CD4-positive, alpha-beta T cell (primary cell): ENCODE measurements at regions of chr12 and their contacts with region 1.

Region 1: GRCh38 chr12:10562306-10562933 is 51.0 kb downstream of the MAGOHB start:
- DNase-seq: peak in 4 of 14 experiments; percentile 33 to 69 (median 64)
- ATAC-seq: no peak
- H3K4me3 ChIP-seq: no peak overlapping the region
- H3K4me3 Mint-ChIP-seq: no peak overlapping the region
- H3K27ac ChIP-seq: no peak overlapping the region
- H3K27ac Mint-ChIP-seq: no peak overlapping the region
- H3K4me1 ChIP-seq: no peaks in the 10 kb centered on the region
- H3K4me1 Mint-ChIP-seq: peaks cover 6% of the 10 kb centered on the region
- H3K27me3 ChIP-seq: no peaks in the 10 kb centered on the region
- H3K27me3 Mint-ChIP-seq: peaks cover 27% of the 10 kb centered on the region
- CTCF ChIP-seq: peak; percentile 85

Region 2: GRCh38 chr12:9808504-9808903 is 753.9 kb before region 1 on chr12:
- CTCF ChIA-PET with region 1: no interaction called
- POLR2A ChIA-PET with region 1: no interaction called
- intact Hi-C with region 1: loop called in 1 of 2 experiments (anchors 10 kb)
- DNase-seq: no peak
- ATAC-seq: no peak
- H3K4me3 ChIP-seq: no peak overlapping the region
- H3K4me3 Mint-ChIP-seq: no peak overlapping the region
- H3K27ac ChIP-seq: no peak overlapping the region
- H3K27ac Mint-ChIP-seq: no peak overlapping the region
- H3K4me1 ChIP-seq: peaks cover 2% of the 10 kb centered on the region
- H3K4me1 Mint-ChIP-seq: peaks cover 2% of the 10 kb centered on the region
- H3K27me3 ChIP-seq: peaks cover 2 to 5% of the 10 kb centered on the region in 2 experiments
- H3K27me3 Mint-ChIP-seq: no peaks in the 10 kb centered on the region
- CTCF ChIP-seq: no peak

Region 3: DNA sequence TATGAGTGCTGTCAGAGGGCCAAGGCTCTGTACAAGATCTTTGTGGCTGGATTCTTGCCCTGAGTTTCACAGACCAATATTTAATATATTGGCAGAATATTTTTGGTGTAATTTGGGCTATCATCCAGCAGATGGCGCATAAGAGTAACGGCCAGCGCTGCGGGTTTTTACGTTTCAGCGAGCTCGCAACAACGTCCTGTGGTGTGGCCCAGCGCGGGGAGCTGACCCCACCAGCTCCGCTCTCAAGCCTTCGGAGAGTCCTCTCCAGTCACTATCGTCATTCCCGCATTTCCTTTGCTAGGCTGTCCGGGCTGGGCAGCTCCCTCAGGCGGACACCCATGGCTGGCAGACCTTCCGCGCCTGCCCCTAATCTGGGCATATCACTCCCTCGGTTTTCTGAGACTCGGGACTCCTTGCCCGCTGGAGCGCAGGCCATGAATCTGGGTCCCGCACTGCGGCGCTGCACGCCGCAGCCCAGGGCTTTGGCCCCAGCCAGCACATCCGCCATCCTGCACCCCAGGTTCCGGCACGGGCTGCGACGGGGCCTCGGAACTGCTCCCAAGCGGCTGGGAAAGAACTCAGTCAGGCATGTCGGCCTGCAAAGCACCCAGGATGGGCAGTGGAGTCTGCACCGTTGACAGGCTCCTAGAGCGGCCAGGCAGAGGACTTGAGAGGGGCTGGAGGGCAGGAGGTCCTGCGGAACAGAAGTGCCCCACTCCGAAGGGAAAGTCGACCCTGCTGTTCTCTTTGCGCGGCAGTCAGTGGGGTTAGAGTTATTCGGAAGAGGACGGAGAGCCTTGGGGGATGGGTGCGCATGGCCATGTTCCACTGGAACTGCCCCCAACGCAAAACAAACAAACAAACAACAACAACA is 408.9 kb before region 1 on chr12:
- CTCF ChIA-PET with region 1: interaction called, 4 read pairs
- POLR2A ChIA-PET with region 1: no interaction called
- intact Hi-C with region 1: loop called in 1 of 2 experiments (anchors 2 kb)
- DNase-seq: peak; percentile 22 to 79 (median 41)
- ATAC-seq: peak; percentile 78
- H3K4me3 ChIP-seq: peak overlapping the region; percentile 63
- H3K4me3 Mint-ChIP-seq: peak overlapping the region; percentile 95
- H3K27ac ChIP-seq: no peak overlapping the region
- H3K27ac Mint-ChIP-seq: peak overlapping the region; percentile 54
- H3K4me1 ChIP-seq: peaks cover 13% of the 10 kb centered on the region
- H3K4me1 Mint-ChIP-seq: peaks cover 9% of the 10 kb centered on the region
- H3K27me3 ChIP-seq: peaks cover 0 to 2% of the 10 kb centered on the region in 2 experiments
- H3K27me3 Mint-ChIP-seq: peaks cover 19% of the 10 kb centered on the region
- CTCF ChIP-seq: peak; percentile 93

Region 4: DNA sequence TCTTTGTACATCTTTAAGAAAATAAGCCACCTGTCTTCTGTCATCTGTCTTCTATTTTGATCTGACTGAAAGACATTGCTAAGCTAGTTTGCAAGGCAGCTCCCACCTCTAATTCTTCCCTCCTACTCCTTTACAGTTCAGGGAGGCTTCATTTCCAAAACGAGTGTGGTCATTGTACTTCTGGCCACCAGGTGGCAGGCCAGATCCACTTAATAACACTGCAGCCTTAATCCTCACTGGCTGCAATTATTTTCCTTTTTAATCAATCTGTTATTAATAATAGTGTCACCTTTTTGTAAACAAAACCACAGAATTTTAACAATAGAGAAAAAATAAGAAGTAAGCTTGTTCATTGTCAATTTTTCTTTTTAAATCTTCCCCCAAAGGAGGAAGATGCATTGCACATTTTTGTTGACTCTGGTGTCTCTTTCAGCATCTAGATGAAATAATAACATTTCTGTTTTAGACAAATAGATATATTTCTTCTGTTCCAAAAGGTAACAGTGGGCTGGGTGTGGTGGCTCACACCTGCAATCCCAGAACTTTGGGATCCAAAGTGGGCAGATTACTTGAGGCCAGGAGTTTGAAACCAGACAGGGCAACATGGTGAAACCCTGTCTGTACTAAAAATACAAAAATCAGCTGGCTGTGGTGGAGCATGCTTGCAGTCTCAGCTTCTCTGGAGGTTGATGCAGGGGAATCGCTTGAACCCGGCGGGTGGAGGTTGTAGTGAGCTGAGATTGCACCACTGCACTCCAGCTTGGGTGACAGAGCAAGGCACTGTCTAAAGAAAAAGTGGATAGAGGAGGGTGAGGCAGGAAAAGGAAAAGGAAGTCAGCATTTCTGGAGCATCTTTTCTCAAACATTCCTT is 326.4 kb before region 1 on chr12:
- CTCF ChIA-PET with region 1: interaction called, 13 read pairs
- POLR2A ChIA-PET with region 1: interaction called, 3 read pairs
- intact Hi-C with region 1: loop called (anchors 1 kb)
- DNase-seq: peak in 13 of 14 experiments; percentile 7 to 77 (median 33)
- ATAC-seq: peak; percentile 77
- H3K4me3 ChIP-seq: no peak overlapping the region
- H3K4me3 Mint-ChIP-seq: no peak overlapping the region
- H3K27ac ChIP-seq: no peak overlapping the region
- H3K27ac Mint-ChIP-seq: no peak overlapping the region
- H3K4me1 ChIP-seq: no peaks in the 10 kb centered on the region
- H3K4me1 Mint-ChIP-seq: no peaks in the 10 kb centered on the region
- H3K27me3 ChIP-seq: no peaks in the 10 kb centered on the region
- H3K27me3 Mint-ChIP-seq: no peaks in the 10 kb centered on the region
- CTCF ChIP-seq: peak; percentile 92

Region 5: DNA sequence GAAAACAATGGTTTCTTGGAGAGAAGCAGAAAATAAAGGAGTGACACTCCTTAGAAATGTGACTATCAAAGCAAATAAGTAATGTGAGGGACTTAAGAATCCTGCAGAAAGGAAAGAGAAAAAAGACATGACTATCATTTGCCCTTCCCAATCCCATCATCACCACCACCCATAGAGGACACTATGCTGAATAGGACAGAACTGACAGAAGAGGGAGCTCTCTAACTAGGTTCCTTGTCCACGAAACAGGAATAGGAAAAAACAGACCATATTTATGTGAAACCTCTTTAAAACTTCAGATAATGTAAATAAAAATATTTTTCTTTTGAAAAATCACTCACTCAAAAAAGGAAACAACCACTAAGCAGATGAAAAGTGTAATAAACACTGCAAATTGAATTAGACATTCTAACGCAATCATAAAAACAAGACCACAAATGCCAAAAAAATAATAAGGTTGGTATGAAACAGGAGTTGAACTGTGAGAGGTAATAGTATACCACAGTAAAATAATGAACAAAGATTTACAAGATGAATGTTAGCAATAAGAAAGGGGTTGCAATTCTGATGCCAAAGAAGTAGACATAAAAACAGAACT is 230.7 kb before region 1 on chr12:
- CTCF ChIA-PET with region 1: interaction called, 3 read pairs
- POLR2A ChIA-PET with region 1: no interaction called
- intact Hi-C with region 1: loop called (anchors 1 kb)
- DNase-seq: peak in 3 of 14 experiments; percentile 53 to 59 (median 56)
- ATAC-seq: peak; percentile 44
- H3K4me3 ChIP-seq: no peak overlapping the region
- H3K4me3 Mint-ChIP-seq: no peak overlapping the region
- H3K27ac ChIP-seq: no peak overlapping the region
- H3K27ac Mint-ChIP-seq: no peak overlapping the region
- H3K4me1 ChIP-seq: no peaks in the 10 kb centered on the region
- H3K4me1 Mint-ChIP-seq: no peaks in the 10 kb centered on the region
- H3K27me3 ChIP-seq: no peaks in the 10 kb centered on the region
- H3K27me3 Mint-ChIP-seq: no peaks in the 10 kb centered on the region
- CTCF ChIP-seq: peak; percentile 63

Region 6: DNA sequence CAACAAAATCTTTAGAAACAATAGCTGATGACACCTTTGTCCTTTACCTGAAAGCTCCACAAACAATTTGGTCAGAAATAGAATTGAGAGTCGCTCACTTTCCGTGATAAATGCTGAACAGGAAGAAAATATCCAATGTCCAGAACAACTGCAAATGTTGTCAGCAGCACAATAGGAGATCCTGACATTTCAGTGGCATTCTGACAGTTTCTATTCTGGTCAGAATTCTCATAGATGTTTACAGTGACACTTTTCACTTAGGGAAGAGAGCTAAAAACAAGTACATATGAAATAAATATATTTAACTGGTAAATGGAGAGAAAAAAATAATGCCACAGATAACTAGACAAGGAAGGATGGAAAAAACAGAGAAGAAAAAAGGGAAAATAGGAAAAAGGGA is 11.9 kb after region 1 on chr12:
- CTCF ChIA-PET with region 1: no interaction called
- POLR2A ChIA-PET with region 1: no interaction called
- intact Hi-C with region 1: no loop called
- DNase-seq: no peak
- ATAC-seq: no peak
- H3K4me3 ChIP-seq: no peak overlapping the region
- H3K4me3 Mint-ChIP-seq: no peak overlapping the region
- H3K27ac ChIP-seq: no peak overlapping the region
- H3K27ac Mint-ChIP-seq: no peak overlapping the region
- H3K4me1 ChIP-seq: no peaks in the 10 kb centered on the region
- H3K4me1 Mint-ChIP-seq: no peaks in the 10 kb centered on the region
- H3K27me3 ChIP-seq: no peaks in the 10 kb centered on the region
- H3K27me3 Mint-ChIP-seq: no peaks in the 10 kb centered on the region
- CTCF ChIP-seq: no peak